ENCODE measurements at regions of chr10 and their contacts with region 1.

Region 1: DNA sequence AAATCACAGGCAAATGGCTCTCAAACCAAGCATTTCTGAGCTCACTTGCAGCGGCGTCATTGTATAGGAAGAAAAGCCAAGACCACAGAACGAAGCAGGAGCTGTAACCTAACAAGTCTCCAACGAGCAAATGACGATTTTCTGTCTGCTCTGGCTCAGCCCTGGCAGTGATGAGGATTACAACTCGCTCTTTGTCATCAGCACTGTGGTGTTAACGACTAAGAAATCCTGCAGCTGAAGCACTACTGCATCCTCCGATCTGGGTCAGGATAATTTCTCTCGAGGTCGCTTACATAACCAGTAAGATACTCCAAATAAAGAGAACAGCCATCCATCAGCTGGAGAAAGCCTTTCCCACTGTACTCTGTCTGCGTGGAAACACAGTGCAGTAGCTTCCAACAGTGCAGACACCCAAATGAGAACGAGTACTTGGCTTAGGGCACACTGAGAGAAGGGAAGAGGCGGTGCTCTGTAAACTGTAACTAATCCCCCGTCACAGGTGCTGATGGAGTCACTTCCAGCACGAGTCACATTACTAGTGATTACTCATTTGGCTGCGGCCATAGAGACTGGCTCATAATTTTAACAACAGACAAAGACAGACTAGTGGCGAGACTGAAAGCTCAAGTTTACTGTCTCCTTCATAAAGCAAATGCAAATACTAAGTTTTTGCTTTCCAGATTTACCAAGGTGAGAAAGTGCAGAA is 135.8 kb downstream of the NRBF2 start:
- DNase-seq: peak; percentile 81
- H3K4me3 Mint-ChIP-seq: peak overlapping the region; percentile 93
- H3K27ac Mint-ChIP-seq: peak overlapping the region; percentile 99
- H3K4me1 Mint-ChIP-seq: peaks cover 26% of the 10 kb centered on the region
- H3K27me3 Mint-ChIP-seq: no peaks in the 10 kb centered on the region
- CTCF ChIP-seq: no peak

Region 2: DNA sequence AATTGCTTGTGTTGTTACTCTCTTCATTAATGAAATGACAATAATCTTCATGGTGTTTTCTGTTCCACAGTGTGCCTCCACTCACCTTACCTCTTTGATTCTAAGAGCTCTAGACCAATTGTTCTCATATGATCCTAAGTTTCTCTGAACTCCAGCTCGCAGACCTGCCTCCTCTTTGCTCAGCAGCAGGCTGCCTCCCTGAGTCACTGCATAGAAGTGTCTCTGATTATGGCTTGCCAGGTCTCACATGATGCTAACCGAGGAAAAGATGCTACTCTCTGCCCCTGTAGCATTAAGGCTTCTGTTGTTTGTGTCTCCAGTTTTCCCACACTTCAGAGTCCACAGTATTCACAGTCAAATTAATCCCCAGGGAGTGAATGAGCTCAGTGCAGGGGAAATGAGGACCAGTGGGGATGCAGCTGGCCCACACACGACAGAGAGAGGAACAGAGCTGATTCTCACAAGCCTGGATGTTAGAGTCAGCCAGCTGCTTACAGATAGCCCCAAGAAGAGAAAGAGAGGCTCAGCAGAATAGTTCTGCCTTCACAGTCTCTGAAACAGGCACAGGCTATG is 306.9 kb before region 1 on chr10:
- CTCF ChIA-PET with region 1: no interaction called
- intact Hi-C with region 1: no loop called
- DNase-seq: no peak
- H3K4me3 Mint-ChIP-seq: no peak overlapping the region
- H3K27ac Mint-ChIP-seq: no peak overlapping the region
- H3K4me1 Mint-ChIP-seq: no peaks in the 10 kb centered on the region
- H3K27me3 Mint-ChIP-seq: peaks cover 59% of the 10 kb centered on the region
- CTCF ChIP-seq: no peak

Region 3: DNA sequence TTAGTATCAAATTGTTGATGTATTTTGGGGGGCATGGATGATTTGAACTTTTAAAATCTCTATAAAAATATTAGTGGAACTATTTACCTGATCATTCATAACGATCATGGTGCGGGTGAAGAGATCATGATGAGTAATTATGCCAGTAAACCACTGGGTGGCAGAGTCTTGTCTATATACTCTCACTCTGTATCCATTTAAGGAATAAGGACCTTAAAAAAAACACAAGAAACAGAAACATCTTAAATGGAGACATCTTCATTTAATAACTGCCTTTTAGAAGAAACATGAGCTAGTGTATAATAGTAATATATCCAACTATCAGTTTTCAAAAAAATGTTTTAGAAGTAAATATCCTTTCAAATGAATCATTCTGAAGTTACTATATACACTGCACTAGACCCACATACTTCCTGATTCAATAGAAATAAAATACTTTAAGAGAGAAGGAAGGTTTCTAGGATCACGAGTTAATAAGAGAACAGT is 51.8 kb before region 1 on chr10:
- CTCF ChIA-PET with region 1: interaction called, 3 read pairs
- intact Hi-C with region 1: loop called (anchors 2 kb)
- DNase-seq: peak; percentile 31
- H3K4me3 Mint-ChIP-seq: no peak overlapping the region
- H3K27ac Mint-ChIP-seq: no peak overlapping the region
- H3K4me1 Mint-ChIP-seq: peaks cover 53% of the 10 kb centered on the region
- H3K27me3 Mint-ChIP-seq: no peaks in the 10 kb centered on the region
- CTCF ChIP-seq: peak; percentile 49

Region 4: DNA sequence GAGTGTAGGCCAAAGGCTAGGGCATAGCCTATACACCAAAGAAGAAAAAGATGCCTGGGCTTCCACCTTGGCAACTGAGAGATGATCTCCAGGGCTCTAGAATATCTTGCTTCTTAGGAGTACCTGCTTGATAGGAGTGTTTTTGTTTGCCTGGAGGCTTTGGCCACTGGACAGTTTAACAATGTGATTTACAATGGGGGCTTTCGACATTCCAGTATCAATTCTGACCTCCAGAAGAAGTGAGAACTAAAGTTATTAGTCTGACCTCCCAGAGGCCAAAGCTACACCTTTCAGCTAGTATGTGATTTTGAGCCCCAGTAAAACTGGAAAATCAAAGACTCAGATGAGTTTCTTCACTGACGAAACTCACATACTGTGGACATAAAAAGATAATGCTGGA is 100.8 kb after region 1 on chr10:
- CTCF ChIA-PET with region 1: no interaction called
- intact Hi-C with region 1: no loop called
- DNase-seq: no peak
- H3K4me3 Mint-ChIP-seq: no peak overlapping the region
- H3K27ac Mint-ChIP-seq: no peak overlapping the region
- H3K4me1 Mint-ChIP-seq: peaks cover 9% of the 10 kb centered on the region
- H3K27me3 Mint-ChIP-seq: no peaks in the 10 kb centered on the region
- CTCF ChIP-seq: no peak

Region 5: GRCh38 chr10:63388421-63389031 is 119.6 kb after region 1 on chr10:
- CTCF ChIA-PET with region 1: no interaction called
- intact Hi-C with region 1: loop called (anchors 10 kb)
- DNase-seq: no peak
- H3K4me3 Mint-ChIP-seq: peak overlapping the region; percentile 38
- H3K27ac Mint-ChIP-seq: peak overlapping the region; percentile 17
- H3K4me1 Mint-ChIP-seq: peaks cover 25% of the 10 kb centered on the region
- H3K27me3 Mint-ChIP-seq: no peaks in the 10 kb centered on the region
- CTCF ChIP-seq: no peak

Region 6: GRCh38 chr10:63465293-63466143 is 196.6 kb after region 1 on chr10 and contains the start of gene JMJD1C:
- CTCF ChIA-PET with region 1: interaction called, 3 read pairs
- intact Hi-C with region 1: loop called (anchors 5 kb)
- DNase-seq: peak; percentile 92
- H3K4me3 Mint-ChIP-seq: peak within 1 kb of the TSS; percentile 99
- H3K27ac Mint-ChIP-seq: peak within 1 kb of the TSS; percentile 92
- H3K4me1 Mint-ChIP-seq: peaks cover 32% of the 10 kb centered on the region
- H3K27me3 Mint-ChIP-seq: no peaks in the 10 kb centered on the region
- CTCF ChIP-seq: no peak
- total RNA-seq, gene JMJD1C: 67.6 and 73.1 TPM in 2 replicates

Region 7: DNA sequence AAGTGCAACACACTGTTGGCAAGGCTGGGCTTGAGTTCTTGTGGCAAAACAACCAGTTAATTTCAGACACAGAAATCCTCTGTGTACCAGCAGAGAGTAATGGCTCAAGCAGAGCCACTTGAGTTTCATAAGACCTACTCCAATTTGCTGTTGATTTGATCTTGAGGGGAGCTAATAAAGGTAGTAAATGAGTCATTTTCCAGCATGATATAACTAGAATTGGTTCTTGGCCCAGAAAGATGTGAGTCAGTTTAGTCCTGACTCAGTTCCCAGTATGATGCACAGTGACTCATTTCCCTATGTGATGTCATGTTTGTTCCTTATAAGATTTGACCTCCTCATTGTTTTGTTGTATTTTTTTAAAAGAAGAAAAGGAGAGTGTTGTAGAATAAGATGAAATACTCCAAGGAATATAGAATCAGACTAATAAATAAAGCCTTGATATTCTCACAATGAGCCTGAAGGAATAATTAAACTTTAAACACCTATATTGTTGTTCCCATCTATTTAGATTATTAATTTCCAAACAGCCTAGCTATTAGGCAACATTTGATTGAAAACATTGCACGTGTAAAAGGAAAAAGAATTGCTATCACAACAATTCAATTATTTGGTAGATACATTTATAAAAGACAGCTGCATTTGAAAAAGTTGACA is 438.4 kb after region 1 on chr10:
- CTCF ChIA-PET with region 1: interaction called, 9 read pairs
- intact Hi-C with region 1: loop called (anchors 2 kb)
- DNase-seq: peak; percentile 61
- H3K4me3 Mint-ChIP-seq: no peak overlapping the region
- H3K27ac Mint-ChIP-seq: peak overlapping the region; percentile 87
- H3K4me1 Mint-ChIP-seq: peaks cover 77% of the 10 kb centered on the region
- H3K27me3 Mint-ChIP-seq: no peaks in the 10 kb centered on the region
- CTCF ChIP-seq: no peak

Measured in Calu3 (cell line).